ENCODE measurements at regions of chr2 and their contacts with region 1.

Region 1: DNA sequence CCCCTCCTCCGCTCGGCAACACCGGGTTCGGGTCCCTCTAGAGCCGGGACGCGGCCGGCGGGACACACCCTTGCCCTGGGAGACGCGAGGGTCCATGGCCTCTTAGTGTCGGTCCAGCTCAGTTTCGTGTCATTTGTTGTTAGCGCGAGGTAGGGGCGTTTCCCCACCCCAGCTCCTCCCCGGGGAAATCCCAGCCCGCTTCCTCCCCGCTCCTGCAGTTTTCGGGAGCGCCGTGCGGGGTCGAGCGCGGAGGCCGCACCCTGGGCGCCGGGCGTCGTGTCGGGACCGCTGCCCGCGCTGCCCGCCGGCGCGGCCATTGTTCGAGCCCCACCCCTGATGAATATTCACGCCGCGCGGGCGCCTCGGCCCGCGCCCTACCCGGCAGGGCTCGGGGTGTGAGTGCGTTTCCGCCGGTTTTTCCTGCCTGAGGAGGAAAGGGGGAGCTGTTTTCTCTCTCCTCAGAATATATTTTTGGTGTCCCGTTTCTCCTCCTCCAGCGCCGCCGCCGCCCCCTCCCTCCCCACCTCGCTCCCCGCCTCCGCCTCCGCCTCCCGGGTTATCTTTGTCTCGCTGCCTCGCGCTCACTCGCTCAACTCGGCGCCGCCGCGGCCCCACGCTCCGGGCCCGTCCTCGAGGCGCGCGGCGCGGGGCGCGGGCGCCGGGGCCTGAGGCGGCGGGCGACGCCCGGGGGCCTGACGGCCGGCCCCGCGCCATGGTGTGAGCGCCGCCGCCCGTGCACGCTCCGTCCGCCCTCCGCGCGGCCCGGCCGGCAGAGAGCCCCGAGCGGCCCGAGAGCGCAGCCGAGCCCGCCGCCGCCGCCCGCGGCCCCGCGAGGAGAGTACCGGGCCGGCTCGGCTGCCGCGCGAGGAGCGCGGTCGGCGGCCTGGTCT is at the start of gene MAP4K4:
- DNase-seq: peak; percentile 96
- total RNA-seq, gene MAP4K4: 135 TPM

Region 2: GRCh38 chr2:101435001-101435862 is 262.1 kb before region 1 on chr2:
- intact Hi-C with region 1: loop called (anchors 10 kb)
- DNase-seq: no peak

Region 3: DNA sequence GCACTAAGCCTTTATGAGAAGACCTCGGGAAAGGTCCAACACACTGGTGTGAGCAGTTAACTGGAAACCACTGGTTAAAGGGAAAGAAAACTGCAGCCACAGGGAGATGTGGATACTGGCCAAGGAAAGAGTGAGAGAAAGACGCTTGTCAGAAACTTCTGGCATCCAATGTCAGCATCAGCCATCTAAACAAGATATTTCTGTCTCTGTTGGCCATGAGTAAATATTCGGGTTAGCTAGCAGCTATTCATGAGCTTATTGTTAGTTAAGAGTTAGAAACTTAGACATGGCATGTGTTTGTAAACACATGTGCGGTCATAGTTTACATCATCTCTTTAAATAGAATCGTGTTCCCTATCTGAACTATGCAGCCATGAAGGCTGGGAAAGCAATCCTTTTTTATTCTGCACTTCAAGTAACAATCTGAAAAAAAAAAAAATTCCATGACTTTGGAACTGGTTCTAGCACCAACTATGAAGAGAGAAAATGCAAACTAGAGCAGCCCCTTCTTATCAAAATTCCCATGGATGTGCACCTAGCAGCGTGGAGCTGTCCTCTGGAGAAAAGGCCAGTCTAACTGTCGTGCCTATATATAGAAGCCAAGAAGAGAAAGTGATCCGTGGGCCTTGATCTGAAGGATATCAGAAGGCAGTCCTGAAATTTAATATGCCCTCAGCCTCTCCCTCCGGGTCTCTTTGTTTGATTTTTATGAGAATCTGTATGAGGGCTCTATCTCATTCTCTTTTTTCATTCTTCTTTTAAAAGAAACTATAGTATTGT is 138.4 kb before region 1 on chr2:
- intact Hi-C with region 1: loop called (anchors 2 kb)
- DNase-seq: no peak

Region 4: GRCh38 chr2:101736861-101737291 is 39.5 kb after region 1 on chr2:
- intact Hi-C with region 1: loop called (anchors 5 kb)
- DNase-seq: no peak

Region 5: DNA sequence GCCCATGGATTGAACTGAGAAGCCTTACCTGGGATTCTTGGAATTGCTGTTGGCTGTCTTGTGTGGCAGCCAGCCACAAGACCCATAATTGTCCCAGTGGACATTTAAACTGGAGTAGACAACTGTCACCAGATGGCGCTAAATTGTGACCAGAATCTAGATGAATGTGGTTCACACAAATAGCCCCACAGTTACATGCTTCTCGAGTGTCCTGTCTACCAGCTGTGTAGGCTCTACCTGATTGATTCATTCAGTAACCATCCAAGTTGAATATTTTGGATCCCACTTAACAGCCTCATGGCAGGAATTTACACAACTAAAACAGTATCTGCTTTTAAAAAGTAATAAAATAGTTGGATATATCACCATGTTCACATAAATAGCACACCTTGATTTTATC is 73.4 kb after region 1 on chr2:
- intact Hi-C with region 1: loop called (anchors 5 kb)
- DNase-seq: no peak

Region 6: GRCh38 chr2:101831351-101831865 is 134.0 kb after region 1 on chr2:
- intact Hi-C with region 1: loop called (anchors 2 kb)
- DNase-seq: peak; percentile 82